Stomach (tissue), 19 donors: ENCODE measurements at regions of chr15 and their contacts with region 1.

Region 1: DNA sequence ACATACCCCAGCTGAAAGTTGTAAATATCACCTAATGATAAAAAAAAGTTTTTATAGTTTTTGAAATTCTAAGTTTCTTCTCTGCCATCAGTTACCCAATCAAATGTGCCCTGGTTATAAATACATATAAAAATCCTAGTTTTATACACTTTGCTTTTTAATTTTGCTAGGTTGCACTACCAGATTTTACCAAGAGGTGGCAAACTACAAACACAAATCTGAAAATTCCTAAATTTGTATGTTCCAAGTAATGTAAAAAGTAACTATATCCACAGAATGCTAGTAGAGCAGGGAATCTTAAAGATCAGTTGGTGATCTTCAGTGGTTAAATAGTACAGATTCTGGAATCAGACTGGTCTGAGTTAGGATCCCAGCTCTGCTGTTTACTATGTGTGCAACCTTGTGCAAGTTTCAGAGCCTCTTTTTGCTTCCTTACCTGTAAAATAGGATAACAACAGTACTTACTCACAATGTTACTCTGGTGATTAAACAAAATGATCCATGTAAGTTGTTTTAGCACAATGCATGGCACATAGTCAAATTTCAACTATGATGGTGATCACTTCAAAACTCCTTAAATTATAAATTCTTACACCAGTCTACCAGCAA is 11.0 kb downstream of the TRPM7 start:
- DNase-seq: peak in 1 of 2 donors; percentile 61
- H3K4me3 ChIP-seq: no peak overlapping the region
- H3K27ac ChIP-seq: no peak overlapping the region
- H3K4me1 ChIP-seq: peaks cover 0 to 38% (median 6%) of the 10 kb centered on the region in 4 donors
- H3K27me3 ChIP-seq: no peaks in the 10 kb centered on the region
- CTCF ChIP-seq: peak in 5 of 7 experiments; percentile 22 to 92 (median 74)
- EP300 ChIP-seq: no peak
- POLR2A ChIP-seq: no peak

Region 2: DNA sequence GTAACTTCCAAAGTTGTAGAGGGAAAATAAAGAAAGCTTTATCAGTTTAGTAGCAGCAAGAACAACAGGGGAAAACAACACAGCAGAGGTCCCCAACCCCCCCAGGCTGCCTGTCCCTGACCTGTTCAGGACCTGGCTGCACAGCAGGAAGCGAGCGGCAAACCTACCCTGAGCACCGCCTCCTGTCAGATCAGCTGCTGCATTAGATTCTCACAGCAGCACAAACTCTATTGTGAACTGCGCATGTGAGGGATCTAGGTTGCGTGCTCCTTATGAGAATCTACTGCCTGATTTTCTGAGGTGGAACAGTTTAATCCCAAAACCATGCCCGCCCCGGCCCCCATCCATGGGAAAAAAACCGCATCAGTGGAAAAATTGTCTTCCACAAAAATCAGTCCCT is 169.5 kb before region 1 on chr15:
- intact Hi-C with region 1: no loop called
- DNase-seq: peak in 1 of 2 donors; percentile 39
- H3K4me3 ChIP-seq: no peak overlapping the region
- H3K27ac ChIP-seq: no peak overlapping the region
- H3K4me1 ChIP-seq: no peaks in the 10 kb centered on the region
- H3K27me3 ChIP-seq: no peaks in the 10 kb centered on the region
- CTCF ChIP-seq: no peak
- EP300 ChIP-seq: no peak
- POLR2A ChIP-seq: no peak

Region 3: DNA sequence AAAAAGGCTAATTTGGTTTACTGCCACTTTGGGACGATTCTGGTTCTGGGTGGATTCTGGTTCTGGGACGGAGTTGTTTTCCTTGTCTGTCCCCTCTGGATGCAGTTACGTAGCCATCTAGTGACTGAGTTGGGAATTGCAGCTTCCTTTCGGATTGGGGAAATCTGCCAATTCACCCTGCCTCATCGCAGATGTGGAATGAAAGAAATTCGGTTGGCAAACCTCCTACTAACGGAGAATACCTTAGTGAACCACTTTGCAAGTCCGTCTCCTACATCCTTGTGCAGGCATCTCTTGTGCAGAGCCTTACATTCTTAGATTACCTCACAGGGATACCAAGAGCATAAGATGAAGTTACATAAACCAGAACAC is 201.3 kb after region 1 on chr15:
- intact Hi-C with region 1: loop called (anchors 5 kb)
- DNase-seq: peak; percentile 74 to 91
- H3K4me3 ChIP-seq: peak overlapping the region; percentile 36 to 43 (median 38)
- H3K27ac ChIP-seq: peak overlapping the region in 2 of 5 donors; percentile 43 to 55
- H3K4me1 ChIP-seq: peaks cover 0 to 30% (median 14%) of the 10 kb centered on the region in 4 donors
- H3K27me3 ChIP-seq: no peaks in the 10 kb centered on the region
- CTCF ChIP-seq: peak in 5 of 7 experiments; percentile 87 to 97 (median 94)
- EP300 ChIP-seq: no peak
- POLR2A ChIP-seq: no peak

Region 4: DNA sequence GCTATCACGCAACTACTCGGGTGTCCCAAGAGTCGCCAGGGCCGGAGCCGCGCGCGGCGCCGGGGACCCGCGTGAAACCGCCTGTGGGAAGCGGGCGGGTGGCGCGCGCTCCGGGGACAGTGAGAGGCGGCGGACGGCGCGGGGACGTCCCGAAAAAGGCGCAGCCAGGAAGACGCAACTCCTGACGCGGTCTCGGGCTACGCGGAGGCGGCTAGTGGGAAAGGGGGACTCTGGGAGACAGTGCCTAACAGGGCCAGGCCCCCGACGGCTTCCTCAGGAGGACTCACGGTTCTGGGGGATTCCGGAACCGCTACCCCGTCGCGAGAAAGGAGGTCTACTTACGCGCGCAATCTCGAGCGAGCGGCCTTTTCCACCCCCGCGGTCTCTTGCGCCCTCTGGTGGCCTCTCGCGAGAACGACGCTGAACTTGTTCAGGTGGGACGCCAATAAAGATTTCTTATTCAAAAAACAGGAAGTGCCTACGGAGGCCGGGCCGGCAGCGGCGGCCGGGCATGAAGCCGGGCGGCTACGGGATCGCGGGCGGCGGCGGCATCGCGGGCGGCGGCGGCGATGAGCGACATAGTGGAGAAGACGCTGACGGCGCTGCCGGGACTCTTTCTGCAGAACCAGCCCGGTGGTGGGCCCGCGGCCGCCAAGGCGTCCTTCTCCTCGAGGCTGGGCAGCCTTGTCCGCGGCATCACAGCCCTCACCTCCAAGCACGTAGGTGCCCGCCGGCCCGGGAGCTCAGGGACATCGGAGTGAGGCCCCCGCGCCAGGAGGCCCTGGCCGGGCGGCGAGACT is 232.8 kb after region 1 on chr15 and contains the start of gene AP4E1:
- intact Hi-C with region 1: loop called (anchors 10 kb)
- DNase-seq: peak; percentile 93 to 97
- H3K4me3 ChIP-seq: peak within 1 kb of the TSS; percentile 81 to 98 (median 97)
- H3K27ac ChIP-seq: peak within 1 kb of the TSS; percentile 88 to 97 (median 93)
- H3K4me1 ChIP-seq: peaks cover 18 to 38% (median 32%) of the 10 kb centered on the region in 4 donors
- H3K27me3 ChIP-seq: no peaks in the 10 kb centered on the region
- CTCF ChIP-seq: peak in 5 of 7 experiments; percentile 91 to 98 (median 98)
- EP300 ChIP-seq: no peak
- POLR2A ChIP-seq: no peak
- total RNA-seq, gene AP4E1: 6.7 to 31.9 (median 11.1) TPM